Right ventricle myocardium superior (tissue), 1 donor: ENCODE measurements at regions of chr18 and their contacts with region 1.

Region 1: DNA sequence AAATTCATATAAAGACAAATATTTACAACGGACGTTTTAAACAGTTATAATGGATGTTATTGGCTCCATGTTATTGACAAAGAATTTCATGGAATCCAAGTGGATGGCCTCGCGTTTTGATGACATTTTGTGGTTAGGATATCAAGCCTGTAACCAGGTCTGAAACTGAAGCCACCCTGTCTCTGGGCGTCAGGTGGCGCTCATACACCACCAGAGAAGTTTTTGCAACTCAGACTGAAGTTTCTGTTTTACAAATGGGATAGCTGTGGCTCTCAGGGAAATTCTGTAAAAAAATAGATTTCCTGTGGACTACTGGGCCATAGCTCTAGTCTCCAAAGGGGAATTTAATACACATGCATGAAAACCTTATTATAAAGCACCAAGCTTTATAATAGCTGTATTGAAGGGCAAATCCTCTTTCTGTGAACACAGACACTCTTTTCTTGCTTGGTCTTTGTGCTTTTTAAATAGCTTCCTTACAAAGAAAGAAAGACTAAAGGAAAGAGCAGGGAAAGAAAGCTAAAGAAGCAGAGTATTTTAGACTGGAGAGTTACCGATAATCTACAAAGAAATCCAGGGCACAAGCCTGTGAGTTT is 86.7 kb downstream of the C18orf54 start:
- DNase-seq: peak; percentile 38
- ATAC-seq: peak; percentile 69

Region 2: GRCh38 chr18:54296062-54296461 is 148.4 kb before region 1 on chr18:
- intact Hi-C with region 1: no loop called
- DNase-seq: no peak
- ATAC-seq: no peak

Region 3: GRCh38 chr18:54679318-54680149 is 235.1 kb after region 1 on chr18:
- intact Hi-C with region 1: loop called (anchors 10 kb)
- DNase-seq: no peak
- ATAC-seq: peak; percentile 67